MCF 10A (cell line): ENCODE measurements at regions of chr1 and their contacts with region 1.

Region 1: DNA sequence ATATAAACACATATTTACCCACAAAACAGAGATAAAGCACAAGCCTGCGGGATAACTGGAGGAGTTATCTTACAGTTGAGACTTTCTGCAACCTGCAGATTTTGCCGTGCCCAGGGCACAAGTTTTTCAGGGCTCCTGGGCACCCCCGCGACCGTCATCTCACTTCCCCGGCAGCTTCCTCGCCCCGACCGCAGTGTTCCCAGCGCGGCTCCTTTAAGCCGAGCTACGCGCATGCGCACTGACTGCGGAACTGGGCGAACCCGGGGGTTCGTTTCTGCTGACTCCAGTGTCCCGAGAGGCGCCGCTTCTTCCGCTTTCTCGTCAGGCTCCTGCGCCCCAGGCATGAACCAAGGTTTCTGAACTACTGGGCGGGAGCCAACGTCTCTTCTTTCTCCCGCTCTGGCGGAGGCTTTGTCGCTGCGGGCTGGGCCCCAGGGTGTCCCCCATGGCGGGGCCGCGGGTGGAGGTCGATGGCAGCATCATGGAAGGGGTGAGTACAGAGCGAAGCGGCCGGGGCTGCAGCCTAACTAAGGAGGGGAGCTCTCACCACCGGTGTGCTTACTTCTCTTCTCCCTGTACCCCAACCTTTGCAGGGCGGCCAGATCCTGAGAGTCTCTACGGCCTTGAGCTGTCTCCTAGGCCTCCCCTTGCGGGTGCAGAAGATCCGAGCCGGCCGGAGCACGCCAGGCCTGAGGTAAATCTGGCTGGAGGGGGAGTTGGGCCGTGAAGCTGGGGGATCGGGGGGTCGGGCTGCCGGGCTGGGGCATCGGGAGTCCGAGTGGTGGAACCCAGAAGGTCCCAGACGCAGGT is at the start of gene RTCA:
- DNase-seq: peak; percentile 98
- H3K4me3 Mint-ChIP-seq: peak within 1 kb of the TSS; percentile 90
- H3K27ac Mint-ChIP-seq: peak within 1 kb of the TSS; percentile 85
- H3K4me1 Mint-ChIP-seq: peaks cover 10% of the 10 kb centered on the region
- H3K27me3 Mint-ChIP-seq: no peaks in the 10 kb centered on the region
- CTCF ChIP-seq: no peak
- total RNA-seq, gene RTCA: 60.4 and 62.3 TPM in 2 replicates

Region 2: DNA sequence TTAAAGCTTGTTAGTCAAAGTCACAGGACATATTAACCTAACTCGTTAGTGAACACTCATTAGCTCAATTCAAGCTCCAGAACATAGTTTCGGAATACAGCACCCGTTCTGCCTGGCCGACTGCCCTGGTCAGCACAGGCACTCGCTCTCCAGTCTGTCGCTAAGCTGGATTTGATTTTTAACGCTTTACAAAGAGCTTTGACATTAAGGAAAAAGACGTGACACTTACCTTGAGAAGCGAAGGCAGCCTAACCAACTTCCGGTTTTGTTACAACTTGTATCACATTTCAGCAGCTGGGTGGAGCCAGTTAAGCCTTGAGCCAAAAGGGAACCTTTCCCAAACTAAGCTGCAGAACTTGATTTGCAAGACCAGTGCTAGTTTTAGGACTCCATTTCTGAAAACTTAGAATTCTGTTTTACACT is 499.7 kb before region 1 on chr1 and contains the start of gene FRRS1:
- CTCF ChIA-PET with region 1: interaction called, 3 read pairs
- POLR2A ChIA-PET with region 1: interaction called, 10 read pairs
- intact Hi-C with region 1: no loop called
- DNase-seq: peak; percentile 87
- H3K4me3 Mint-ChIP-seq: peak within 1 kb of the TSS; percentile 97
- H3K27ac Mint-ChIP-seq: peak within 1 kb of the TSS; percentile 98
- H3K4me1 Mint-ChIP-seq: peaks cover 19% of the 10 kb centered on the region
- H3K27me3 Mint-ChIP-seq: no peaks in the 10 kb centered on the region
- CTCF ChIP-seq: no peak
- total RNA-seq, gene FRRS1: 7.2 and 7.4 TPM in 2 replicates

Region 3: GRCh38 chr1:99849744-99850458 is 416.2 kb before region 1 on chr1 and contains the start of gene AGL:
- CTCF ChIA-PET with region 1: interaction called, 3 read pairs
- POLR2A ChIA-PET with region 1: interaction called, 12 read pairs
- intact Hi-C with region 1: no loop called
- DNase-seq: peak; percentile 84
- H3K4me3 Mint-ChIP-seq: peak within 1 kb of the TSS; percentile 93
- H3K27ac Mint-ChIP-seq: peak within 1 kb of the TSS; percentile 85
- H3K4me1 Mint-ChIP-seq: peaks cover 14% of the 10 kb centered on the region
- H3K27me3 Mint-ChIP-seq: no peaks in the 10 kb centered on the region
- CTCF ChIP-seq: no peak
- total RNA-seq, gene AGL: 8.9 and 9.1 TPM in 2 replicates

Region 4: DNA sequence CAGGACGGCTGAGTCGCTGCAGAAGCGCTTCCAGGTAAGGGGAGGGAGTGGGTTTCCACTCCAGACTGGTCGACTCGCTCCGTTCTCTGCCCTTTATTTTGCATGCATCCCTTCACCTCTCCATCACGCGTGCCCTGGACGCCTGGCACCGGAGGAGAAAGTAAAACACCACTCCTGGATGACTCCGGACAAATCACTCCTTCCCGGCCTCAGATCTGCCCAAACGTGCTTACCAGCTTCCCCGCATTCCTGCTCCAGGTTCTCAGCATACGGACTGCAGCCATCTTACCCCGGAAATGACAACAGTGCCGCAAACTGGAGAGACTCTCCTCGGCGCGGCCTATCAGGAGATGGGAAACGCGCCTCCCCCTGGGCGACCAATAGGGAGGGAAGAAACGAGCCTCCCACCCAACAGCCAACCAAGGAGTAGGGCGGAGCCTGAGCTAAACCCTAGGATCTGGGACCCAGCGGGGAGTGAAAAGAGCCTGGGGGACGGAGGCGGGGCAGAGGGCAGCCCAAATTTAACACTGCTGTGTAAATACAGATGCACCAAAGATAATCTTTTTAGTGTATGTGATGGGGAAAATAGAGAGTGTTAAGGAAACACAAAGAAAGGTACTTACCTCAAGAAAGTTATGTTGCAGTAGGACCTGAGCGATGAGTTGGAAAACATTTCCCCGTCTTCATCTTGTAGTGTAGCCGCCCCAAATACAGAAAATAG is 16.4 kb before region 1 on chr1 and contains the start of gene DBT:
- CTCF ChIA-PET with region 1: interaction called, 9 read pairs
- POLR2A ChIA-PET with region 1: interaction called, 114 read pairs
- intact Hi-C with region 1: no loop called
- DNase-seq: peak; percentile 96
- H3K4me3 Mint-ChIP-seq: no peak within 1 kb of the TSS
- H3K27ac Mint-ChIP-seq: no peak within 1 kb of the TSS
- H3K4me1 Mint-ChIP-seq: peaks cover 9% of the 10 kb centered on the region
- H3K27me3 Mint-ChIP-seq: no peaks in the 10 kb centered on the region
- CTCF ChIP-seq: no peak
- total RNA-seq, gene DBT: 9.1 and 11.0 TPM in 2 replicates

Region 5: DNA sequence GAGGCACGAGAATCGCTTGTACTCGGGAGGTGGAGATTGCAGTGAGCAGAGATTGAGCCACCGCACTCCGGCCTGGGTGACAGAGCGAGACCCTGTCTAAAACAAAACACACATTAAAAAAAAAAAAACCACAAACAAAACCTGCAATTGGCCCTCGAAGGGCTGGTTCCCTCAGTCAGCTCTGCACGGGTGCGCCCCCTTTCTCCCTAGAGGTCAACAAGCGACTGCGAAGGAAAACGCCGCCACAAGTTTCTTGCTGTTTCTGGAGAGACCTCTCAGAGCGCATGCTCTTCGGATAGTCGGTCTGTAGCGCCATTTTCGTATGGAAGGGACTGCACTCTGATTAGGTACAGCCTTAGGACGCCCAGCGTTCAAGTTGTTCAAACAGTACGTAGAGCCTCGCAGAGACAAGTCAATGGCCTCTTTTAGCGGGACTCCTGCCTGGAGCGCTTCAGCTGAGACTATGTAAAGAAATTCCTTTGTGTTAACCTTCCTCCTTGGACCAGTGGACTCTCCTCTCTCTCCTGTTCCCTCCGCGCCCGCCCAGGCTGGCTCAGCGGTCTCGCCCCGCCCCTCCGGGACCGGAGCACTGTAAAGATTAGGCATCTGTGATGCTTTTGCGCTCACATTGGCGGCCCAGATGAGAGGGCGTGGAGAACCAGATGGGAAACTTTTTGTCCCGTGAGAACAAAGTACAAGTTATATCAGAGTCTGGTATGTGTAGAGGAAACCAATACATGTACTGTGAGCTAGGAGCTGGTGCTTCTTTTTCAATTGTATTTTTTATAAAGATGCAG is 85.2 kb after region 1 on chr1:
- CTCF ChIA-PET with region 1: interaction called, 3 read pairs
- POLR2A ChIA-PET with region 1: interaction called, 67 read pairs
- intact Hi-C with region 1: loop called (anchors 2 kb)
- DNase-seq: peak; percentile 91
- H3K4me3 Mint-ChIP-seq: peak overlapping the region; percentile 92
- H3K27ac Mint-ChIP-seq: peak overlapping the region; percentile 86
- H3K4me1 Mint-ChIP-seq: peaks cover 22% of the 10 kb centered on the region
- H3K27me3 Mint-ChIP-seq: no peaks in the 10 kb centered on the region
- CTCF ChIP-seq: peak; percentile 32